ENCODE measurements at regions of chr5 and their contacts with region 1.

Region 1: DNA sequence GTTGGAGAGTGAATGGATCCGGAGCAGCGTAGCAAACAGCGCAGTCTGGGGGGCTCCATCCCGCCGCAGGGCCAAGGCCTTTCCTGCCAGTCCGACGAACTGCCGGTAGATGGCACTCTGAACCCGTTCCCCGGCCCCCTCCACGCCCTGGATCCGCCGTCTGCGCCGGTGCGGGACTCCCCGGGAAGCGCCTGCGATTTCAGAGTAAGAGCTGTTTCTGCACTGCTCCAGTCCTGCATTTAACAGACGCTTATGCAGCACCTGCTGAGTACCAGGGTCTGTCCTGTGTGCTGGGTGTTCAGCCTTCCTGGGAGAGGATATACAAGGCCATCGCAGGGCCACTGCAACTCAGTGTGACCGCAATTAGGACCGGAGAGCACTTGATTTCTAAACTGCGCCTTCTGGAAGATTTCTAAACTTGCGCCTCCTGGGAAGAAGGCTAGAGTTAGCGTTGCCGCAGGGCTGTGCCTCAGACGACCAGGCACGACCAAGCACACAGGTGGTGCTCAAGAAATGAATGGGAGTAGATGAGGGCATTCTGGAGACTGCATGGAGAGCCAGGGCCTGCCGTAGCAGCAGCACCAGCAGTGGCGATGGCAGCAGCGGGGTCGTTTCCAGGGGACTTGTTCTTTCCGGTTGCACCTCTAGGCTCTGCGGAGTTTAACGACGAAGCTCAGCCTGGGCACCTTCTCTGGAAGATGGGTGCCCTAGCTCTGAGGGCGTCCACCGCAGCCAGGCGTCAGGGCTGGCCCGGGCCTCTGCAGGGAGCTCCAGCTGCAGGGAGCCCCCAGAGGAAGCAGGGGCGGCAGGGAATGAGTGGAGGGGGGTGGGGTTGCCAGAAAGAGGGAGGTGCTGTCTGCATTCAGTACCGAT is 14.3 kb upstream of the TIFAB start:
- DNase-seq: peak; percentile 76 to 97 (median 84)

Region 2: GRCh38 chr5:135551593-135552447 is 85.4 kb after region 1 on chr5:
- intact Hi-C with region 1: loop called (anchors 1 kb)
- DNase-seq: peak in 9 of 10 donors; percentile 37 to 95 (median 80)

Measured in posterior cingulate gyrus (tissue), 11 donors.